ENCODE measurements at regions of chrX and their contacts with region 1.

Region 1: DNA sequence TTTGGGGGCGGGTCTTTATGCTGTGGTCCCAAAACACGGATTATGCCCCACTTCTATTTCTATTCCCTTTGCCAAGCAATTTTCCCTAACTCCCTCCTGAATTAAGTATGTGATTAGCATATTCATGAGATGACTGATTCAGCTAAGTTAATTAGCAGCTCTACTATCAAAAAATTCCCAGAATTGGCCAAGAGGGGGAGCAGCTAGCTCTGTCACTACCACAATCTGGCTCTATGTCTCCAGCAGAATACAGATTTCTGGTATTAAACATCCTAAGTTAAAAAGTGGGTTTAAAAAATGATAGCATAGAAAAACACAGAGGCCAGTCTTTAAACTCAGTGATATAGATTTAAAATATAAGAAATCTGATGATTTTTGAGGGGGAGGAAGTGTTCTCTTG is 80.3 kb downstream of the GPC4 start:
- DNase-seq: peak; percentile 26 to 49 (median 42)
- H3K4me3 ChIP-seq: no peak overlapping the region
- H3K27ac ChIP-seq: no peak overlapping the region
- H3K4me1 ChIP-seq: no peaks in the 10 kb centered on the region
- H3K27me3 ChIP-seq: peaks cover 0 to 4% (median 0%) of the 10 kb centered on the region in 5 experiments

Region 2: DNA sequence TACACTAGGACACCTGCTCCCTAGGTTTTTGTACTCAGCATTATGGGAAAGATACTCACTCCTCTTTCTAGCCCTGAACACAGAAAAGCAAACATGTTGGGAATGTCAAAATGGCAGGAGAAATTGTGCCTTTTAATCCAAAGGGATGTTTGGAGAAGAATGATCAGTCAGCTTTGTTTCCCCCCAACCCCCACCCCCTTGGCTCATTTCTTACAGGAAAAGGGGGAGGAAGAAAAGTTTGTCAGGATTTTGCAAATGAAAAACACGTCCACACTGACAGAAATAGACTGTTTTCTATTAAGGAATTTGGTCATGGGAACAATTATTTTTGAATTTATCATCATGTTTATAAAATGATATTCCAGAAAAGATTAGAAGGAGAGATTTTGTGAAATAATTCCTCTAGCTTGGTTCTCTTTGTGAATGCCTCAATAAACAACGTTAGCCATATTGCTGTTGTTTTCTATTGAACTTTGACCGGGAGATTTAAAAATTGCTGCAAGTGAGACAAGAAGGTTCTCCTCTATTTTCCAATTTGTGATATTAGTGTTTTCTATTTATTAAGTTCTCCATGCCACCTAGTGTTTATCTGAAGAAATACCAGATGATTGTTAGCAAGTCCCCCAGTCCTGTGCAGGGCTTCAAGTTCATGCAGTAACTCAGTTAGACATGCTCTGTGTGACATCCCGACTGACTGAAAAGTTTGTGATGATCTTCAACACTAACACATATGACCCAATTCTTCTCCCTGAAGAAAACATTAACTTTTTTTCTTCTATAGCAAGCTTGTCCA is 85.6 kb before region 1 on chrX:
- CTCF ChIA-PET with region 1: no interaction called
- POLR2A ChIA-PET with region 1: no interaction called
- DNase-seq: no peak
- H3K4me3 ChIP-seq: no peak overlapping the region
- H3K27ac ChIP-seq: no peak overlapping the region
- H3K4me1 ChIP-seq: no peaks in the 10 kb centered on the region
- H3K27me3 ChIP-seq: peaks cover 0 to 2% (median 0%) of the 10 kb centered on the region in 5 experiments

Region 3: DNA sequence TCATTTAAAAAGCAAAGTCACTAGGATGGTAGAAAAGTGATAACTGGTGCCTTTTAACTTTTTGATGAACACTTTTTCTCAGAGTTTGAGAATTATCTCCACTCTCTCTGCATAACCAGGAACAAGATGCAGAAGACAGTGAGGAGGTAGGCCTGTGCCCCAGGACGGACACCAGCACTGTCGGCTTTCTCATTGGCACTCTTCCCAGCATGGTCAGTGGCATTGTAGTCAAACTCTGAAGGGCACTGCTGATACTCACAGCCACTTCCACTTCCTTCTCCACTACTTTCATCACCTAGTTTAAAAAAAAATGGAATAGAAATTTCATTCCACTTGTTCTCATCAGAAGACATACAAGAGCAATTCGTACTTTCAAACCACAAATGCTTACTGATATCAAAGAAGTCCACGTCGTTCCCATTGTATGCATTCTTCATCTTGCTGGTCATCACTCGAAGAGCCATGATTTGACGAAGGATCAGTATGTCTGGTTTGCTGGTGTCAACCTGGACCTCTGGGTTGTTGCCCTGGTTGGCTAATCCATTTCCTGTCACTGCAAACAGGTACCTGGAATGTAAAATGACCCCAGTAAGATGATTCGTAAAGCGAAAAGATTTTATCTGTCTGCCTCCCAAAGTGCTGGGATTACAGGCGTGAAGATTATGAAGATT is 32.1 kb before region 1 on chrX:
- CTCF ChIA-PET with region 1: no interaction called
- POLR2A ChIA-PET with region 1: no interaction called
- DNase-seq: no peak
- H3K4me3 ChIP-seq: no peak overlapping the region
- H3K27ac ChIP-seq: no peak overlapping the region
- H3K4me1 ChIP-seq: no peaks in the 10 kb centered on the region
- H3K27me3 ChIP-seq: peaks cover 0 to 5% (median 0%) of the 10 kb centered on the region in 5 experiments

Region 4: GRCh38 chrX:133444951-133445831 is 110.2 kb after region 1 on chrX:
- CTCF ChIA-PET with region 1: no interaction called
- POLR2A ChIA-PET with region 1: no interaction called
- DNase-seq: peak in 2 of 3 donors; percentile 18 to 36
- H3K4me3 ChIP-seq: peak overlapping the region in 3 of 7 experiments; percentile 9 to 53 (median 13)
- H3K27ac ChIP-seq: no peak overlapping the region
- H3K4me1 ChIP-seq: no peaks in the 10 kb centered on the region
- H3K27me3 ChIP-seq: peaks cover 0 to 5% (median 0%) of the 10 kb centered on the region in 5 experiments

Region 5: DNA sequence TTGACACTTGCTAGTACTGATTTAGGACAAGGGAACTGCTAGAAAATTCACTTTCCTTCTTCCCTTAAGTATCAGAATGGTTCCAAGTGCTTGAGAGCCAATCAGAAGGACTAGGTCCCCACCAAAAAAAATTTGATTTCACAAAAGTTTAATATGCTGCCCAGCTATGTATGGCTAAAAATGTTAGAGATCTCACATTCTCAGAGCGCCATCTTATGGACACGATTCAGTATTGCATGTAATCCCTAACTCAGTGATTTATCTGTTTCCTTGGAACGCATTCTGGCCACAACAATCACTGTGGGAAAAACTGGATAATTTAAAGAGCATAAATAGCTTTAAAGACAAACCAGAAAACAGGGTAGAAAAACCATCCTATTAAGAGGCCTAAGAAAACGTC is 335.4 kb after region 1 on chrX:
- CTCF ChIA-PET with region 1: interaction called, 11 read pairs
- POLR2A ChIA-PET with region 1: no interaction called
- DNase-seq: peak; percentile 21 to 52 (median 31)
- H3K4me3 ChIP-seq: no peak overlapping the region
- H3K27ac ChIP-seq: no peak overlapping the region
- H3K4me1 ChIP-seq: no peaks in the 10 kb centered on the region
- H3K27me3 ChIP-seq: peaks cover 0 to 11% (median 0%) of the 10 kb centered on the region in 5 experiments

Region 6: GRCh38 chrX:133859860-133860259 is 524.8 kb after region 1 on chrX:
- CTCF ChIA-PET with region 1: no interaction called
- POLR2A ChIA-PET with region 1: no interaction called
- DNase-seq: no peak
- H3K4me3 ChIP-seq: no peak overlapping the region
- H3K27ac ChIP-seq: no peak overlapping the region
- H3K4me1 ChIP-seq: no peaks in the 10 kb centered on the region
- H3K27me3 ChIP-seq: no peaks in the 10 kb centered on the region

Measured in common myeloid progenitor, CD34-positive (primary cell).